Testis (tissue), 5 donors: ENCODE measurements at regions of chr3 and their contacts with region 1.

Region 1: DNA sequence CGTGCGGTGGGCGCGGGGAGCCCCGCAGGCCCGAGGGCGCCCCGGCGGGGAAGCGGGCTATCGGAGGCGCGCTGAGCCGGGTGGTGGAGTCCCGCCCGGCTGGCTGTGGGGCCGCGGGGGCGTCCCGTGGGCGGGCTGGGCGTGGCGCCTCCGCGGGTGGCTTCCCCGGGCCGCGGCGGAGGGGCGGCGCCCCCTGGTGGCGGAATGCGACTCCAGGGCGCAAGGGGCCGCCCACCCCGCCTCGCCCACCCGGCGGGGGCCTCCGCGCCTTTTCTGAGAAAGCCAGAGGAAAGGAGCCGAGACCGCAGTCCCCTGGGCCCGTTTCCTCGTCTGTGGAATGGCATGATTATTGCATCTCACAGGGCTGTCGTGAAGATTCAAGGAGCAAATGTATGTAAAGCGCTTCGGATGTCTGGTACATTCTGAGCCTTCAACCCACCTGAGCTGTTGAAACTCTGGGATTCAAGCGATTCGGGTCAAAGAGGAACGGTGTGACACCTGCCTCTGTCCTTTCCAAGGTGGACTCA is 31.9 kb upstream of the RAB6B start:
- DNase-seq: peak; percentile 71
- H3K4me3 ChIP-seq: peak overlapping the region; percentile 61 to 62
- H3K27ac ChIP-seq: no peak overlapping the region
- H3K4me1 ChIP-seq: peaks cover 3% of the 10 kb centered on the region
- H3K27me3 ChIP-seq: no peaks in the 10 kb centered on the region
- CTCF ChIP-seq: peak; percentile 83 to 88 (median 86)
- POLR2A ChIP-seq: no peak

Region 2: DNA sequence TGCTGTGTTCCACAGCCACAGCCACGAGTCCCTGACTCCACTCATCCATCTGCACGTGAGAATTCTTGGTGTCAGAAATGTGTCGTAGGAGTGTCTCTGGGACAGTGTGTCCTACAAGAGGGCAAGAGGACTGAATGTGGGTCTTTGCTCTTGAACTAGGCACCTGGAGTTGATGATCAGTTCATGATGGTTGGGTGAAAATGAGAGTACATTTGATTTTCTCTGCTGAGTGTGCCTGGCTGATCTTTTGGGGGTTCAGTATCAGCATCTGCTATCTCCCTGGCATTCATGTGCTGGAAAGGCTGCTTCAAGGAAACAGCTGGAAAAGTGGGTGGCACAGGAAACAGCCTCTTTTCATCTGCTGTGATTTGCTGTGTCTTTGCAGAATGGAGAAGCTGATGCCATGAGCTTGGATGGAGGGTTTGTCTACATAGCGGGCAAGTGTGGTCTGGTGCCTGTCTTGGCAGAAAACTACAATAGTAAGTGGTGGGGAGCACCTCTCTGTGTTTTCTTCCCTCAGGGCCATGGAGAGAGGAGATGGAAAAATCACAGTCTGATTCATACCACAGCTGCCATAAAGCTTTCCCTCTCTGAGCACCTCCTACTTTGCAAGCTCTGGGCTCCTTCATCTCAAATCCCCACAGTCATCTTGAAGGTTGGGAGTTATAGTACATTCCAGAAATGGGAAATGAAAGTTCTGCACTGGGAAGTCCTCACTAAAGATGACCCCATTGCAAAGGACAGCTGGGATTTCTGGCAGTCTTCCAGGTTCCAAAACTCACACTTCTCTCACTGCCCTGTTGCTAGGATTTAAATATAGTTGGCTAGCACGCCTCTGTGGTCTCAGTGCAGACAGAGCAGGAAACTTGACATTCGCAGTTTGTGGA is 163.6 kb before region 1 on chr3:
- intact Hi-C with region 1: no loop called
- DNase-seq: no peak
- H3K4me3 ChIP-seq: no peak overlapping the region
- H3K27ac ChIP-seq: no peak overlapping the region
- H3K4me1 ChIP-seq: no peaks in the 10 kb centered on the region
- H3K27me3 ChIP-seq: no peaks in the 10 kb centered on the region
- CTCF ChIP-seq: no peak
- POLR2A ChIP-seq: no peak

Region 3: DNA sequence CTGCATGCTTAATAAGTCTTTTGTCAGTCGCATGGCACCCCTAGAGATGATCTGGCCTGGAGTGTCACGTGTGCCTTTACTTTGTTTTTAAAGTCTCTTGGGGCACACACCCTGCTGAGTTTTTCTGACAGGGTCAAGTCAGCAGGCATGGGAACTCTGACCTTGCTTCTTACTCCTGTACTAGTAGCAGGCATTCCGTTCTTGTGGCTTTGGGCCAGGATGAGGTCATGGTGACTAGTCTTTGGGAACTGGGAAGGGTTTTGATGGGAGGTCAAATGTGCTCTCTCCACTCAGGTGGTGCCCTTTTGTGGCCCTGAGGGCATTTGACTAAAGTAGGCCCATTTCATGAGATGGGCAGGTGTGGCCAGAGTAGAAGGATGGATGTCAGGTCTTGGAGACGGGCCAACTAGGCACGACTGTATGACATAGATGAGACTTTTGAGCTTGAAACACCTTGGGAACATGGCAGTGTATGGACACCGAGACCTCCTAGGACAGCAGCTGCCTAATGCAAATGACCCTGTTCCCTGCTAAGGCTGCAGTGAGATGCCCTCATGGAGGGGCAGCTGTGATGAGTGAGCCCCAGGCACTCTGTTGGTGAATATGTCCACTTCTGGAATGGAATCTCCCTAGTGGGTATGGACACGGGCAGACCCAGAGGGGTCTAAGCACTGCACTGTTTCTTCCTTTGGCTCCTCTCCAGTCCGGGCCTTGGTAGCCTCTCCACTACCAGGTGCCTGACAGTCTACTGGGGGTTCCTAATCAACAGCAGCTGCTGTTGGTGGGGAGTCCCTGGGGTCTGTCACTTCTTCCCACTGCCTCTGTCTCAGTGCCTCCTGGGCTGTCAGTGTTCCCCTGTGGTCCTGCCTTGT is 105.6 kb before region 1 on chr3:
- intact Hi-C with region 1: loop called (anchors 5 kb)
- DNase-seq: peak; percentile 42
- H3K4me3 ChIP-seq: no peak overlapping the region
- H3K27ac ChIP-seq: no peak overlapping the region
- H3K4me1 ChIP-seq: no peaks in the 10 kb centered on the region
- H3K27me3 ChIP-seq: no peaks in the 10 kb centered on the region
- CTCF ChIP-seq: peak in 1 of 3 experiments; percentile 7
- POLR2A ChIP-seq: no peak

Region 4: GRCh38 chr3:134212906-134213665 is 285.5 kb after region 1 on chr3:
- intact Hi-C with region 1: loop called (anchors 5 kb)
- DNase-seq: peak; percentile 89
- H3K4me3 ChIP-seq: no peak overlapping the region
- H3K27ac ChIP-seq: no peak overlapping the region
- H3K4me1 ChIP-seq: no peaks in the 10 kb centered on the region
- H3K27me3 ChIP-seq: no peaks in the 10 kb centered on the region
- CTCF ChIP-seq: peak; percentile 91 to 99 (median 94)
- POLR2A ChIP-seq: no peak